Activated T-helper 1 cell treated with anti-CD3 and anti-CD28 coated beads, Interleukin-12 subunit alpha, Interleukin-12 subunit beta, Interleukin-2, Interleukin-4 antibody, amounts not matched to agents 30 ng/mL and 10 ng/mL and 1 ng/mL, durations not matched to agents 14 hours and 24 hours and 36 hours (primary cell): ENCODE measurements at regions of chr5 and their contacts with region 1.

Region 1: DNA sequence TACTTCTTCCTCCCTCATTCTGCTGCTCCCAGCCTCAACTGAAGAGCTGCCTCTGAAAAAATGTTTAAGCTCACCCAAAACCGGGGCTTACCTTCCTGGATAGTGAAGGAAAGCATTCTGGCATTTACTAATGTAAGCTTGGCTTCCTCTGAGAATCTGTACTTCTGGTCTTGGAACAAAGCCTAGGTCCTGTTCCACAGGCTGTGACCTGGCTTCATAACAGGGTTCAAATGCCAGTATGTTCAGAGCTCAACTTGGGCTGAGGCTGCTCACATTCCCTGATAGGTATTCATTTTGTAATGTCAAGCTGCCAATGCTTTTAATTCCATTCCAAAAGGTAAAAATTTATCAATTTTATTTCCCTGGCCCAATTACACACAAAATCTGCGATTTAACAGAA is 411.7 kb upstream of the KCNN2 start:
- DNase-seq: no peak
- H3K4me3 Mint-ChIP-seq: no peak overlapping the region
- H3K27ac Mint-ChIP-seq: no peak overlapping the region
- H3K4me1 Mint-ChIP-seq: no peaks in the 10 kb centered on the region
- H3K27me3 Mint-ChIP-seq: no peaks in the 10 kb centered on the region

Region 2: GRCh38 chr5:113900807-113901206 is 49.4 kb before region 1 on chr5:
- intact Hi-C with region 1: loop called (anchors 5 kb)
- DNase-seq: no peak
- H3K4me3 Mint-ChIP-seq: no peak overlapping the region
- H3K27ac Mint-ChIP-seq: no peak overlapping the region
- H3K4me1 Mint-ChIP-seq: no peaks in the 10 kb centered on the region
- H3K27me3 Mint-ChIP-seq: no peaks in the 10 kb centered on the region